Tibial artery (tissue), 4 donors: ENCODE measurements at regions of chr5 and their contacts with region 1.

Region 1: GRCh38 chr5:178279725-178280438 is 47.3 kb upstream of the PHYKPL start:
- DNase-seq: peak; percentile 71 to 87
- H3K4me3 ChIP-seq: no peak overlapping the region
- H3K27ac ChIP-seq: no peak overlapping the region
- H3K4me1 ChIP-seq: peaks cover 0 to 7% (median 3%) of the 10 kb centered on the region in 4 donors
- H3K27me3 ChIP-seq: peaks cover 0 to 43% of the 10 kb centered on the region in 2 donors
- CTCF ChIP-seq: peak; percentile 81 to 87

Region 2: DNA sequence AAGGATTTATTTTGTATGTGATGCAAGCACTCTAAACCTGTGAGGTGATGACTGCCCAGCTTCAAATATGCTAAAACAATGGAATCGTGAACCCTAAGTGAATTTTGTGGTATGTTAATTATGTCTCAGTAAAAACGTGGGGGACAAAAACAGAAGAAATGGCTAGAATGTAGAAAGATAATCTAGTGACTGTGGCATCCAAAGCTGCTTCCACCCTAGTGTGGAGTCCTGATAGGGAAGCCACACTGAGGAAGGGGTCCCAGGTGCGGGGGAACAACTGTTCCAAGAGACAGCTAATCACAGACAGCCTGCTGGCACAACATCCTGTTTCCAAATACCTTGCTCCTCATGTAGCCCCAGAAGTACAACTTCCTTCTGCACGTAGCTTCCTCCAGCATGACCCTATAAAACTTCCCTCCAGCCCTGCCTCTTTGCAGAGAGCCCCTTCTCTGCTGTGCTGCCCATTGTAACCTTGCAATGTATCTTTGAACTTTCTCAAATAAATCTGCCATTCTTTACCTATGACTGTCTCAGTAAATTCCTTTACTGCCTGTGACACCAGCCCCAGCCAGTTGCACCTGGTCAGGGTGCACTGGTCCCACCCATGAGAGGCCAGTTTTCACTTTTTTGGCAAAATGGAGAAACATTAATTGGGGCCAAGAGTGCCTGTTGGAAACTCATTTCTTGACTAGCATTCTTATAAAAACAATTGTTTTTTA is 97.6 kb before region 1 on chr5:
- intact Hi-C with region 1: no loop called
- DNase-seq: no peak
- H3K4me3 ChIP-seq: no peak overlapping the region
- H3K27ac ChIP-seq: no peak overlapping the region
- H3K4me1 ChIP-seq: no peaks in the 10 kb centered on the region
- H3K27me3 ChIP-seq: peaks cover 0 to 7% of the 10 kb centered on the region in 2 donors
- CTCF ChIP-seq: no peak

Region 3: DNA sequence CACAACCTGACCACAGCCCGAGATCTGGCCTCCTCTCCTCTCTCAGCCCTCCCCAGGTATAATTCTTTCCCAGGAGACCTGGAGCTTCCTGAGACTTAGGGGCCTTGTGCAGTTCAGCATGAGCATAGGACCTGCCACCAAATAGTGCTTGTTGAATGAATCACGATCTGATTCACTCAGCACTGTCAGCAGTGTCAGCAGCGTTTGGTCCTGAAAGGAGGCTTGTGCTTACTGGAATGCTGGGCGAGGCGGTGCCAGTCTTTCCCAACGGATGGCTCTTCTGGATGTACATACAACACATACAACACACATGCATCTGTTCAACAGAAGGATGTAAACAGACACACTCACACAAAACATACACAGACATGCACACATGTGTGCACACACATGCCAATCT is 137.0 kb after region 1 on chr5:
- intact Hi-C with region 1: no loop called
- DNase-seq: no peak
- H3K4me3 ChIP-seq: no peak overlapping the region
- H3K27ac ChIP-seq: no peak overlapping the region
- H3K4me1 ChIP-seq: no peaks in the 10 kb centered on the region
- H3K27me3 ChIP-seq: peaks cover 0 to 3% of the 10 kb centered on the region in 2 donors
- CTCF ChIP-seq: no peak

Region 4: GRCh38 chr5:178502401-178503100 is 222.7 kb after region 1 on chr5:
- intact Hi-C with region 1: no loop called
- DNase-seq: no peak
- H3K4me3 ChIP-seq: no peak overlapping the region
- H3K27ac ChIP-seq: no peak overlapping the region
- H3K4me1 ChIP-seq: no peaks in the 10 kb centered on the region
- H3K27me3 ChIP-seq: no peaks in the 10 kb centered on the region
- CTCF ChIP-seq: no peak

Region 5: DNA sequence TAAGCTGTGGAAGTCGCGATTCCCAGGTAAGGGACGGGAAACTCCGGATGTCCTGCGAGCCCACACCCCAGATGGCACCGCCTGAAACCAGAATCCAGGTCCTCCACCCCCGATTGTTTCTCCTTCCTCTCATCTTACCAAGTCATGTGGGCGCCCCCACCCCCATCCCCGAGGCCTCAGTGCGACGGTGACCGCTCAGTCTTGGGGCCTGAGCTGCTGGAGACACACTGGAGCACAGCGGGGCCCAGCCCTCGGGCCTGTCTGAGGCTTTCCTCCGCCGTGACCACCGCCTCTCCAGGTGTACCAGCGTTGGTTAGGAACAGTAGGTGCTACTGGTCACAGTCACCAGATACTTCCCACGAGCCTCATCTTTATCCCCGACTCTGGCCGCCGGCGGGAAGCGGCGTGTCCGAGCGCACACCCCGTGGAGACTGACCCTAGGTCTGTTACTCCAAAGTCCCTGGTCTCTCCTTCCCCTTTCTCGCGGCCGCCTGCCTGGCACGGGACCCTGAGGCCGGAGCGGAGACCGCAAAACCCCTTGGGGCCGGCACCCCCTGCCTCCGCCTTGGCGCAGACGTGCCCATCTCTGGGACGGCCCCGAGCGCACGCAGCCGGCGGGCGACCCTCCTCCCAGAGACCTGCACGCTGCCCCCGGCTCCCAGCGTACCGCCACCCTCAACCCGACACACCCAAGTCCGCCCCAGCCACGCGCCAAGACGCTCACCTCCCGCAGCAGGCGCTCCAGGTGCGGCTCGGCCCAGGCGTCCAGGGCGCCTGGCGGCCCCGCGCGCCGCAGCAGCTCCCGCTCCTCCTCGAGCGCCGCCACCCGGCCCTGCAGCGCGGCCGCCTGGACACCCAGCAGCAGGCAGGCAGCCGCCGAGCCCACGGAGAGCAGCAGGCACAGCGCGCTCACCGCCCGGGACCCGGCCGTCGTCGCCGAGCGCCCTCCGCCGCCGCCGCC is 309.6 kb after region 1 on chr5:
- intact Hi-C with region 1: loop called (anchors 10 kb)
- DNase-seq: no peak
- H3K4me3 ChIP-seq: peak overlapping the region; percentile 50 to 57
- H3K27ac ChIP-seq: peak overlapping the region in 1 of 2 donors; percentile 42
- H3K4me1 ChIP-seq: peaks cover 0 to 26% (median 19%) of the 10 kb centered on the region in 4 donors
- H3K27me3 ChIP-seq: peaks cover 0 to 29% of the 10 kb centered on the region in 2 donors
- CTCF ChIP-seq: no peak

Region 6: GRCh38 chr5:178642351-178642971 is 362.6 kb after region 1 on chr5:
- intact Hi-C with region 1: no loop called
- DNase-seq: no peak
- H3K4me3 ChIP-seq: no peak overlapping the region
- H3K27ac ChIP-seq: no peak overlapping the region
- H3K4me1 ChIP-seq: no peaks in the 10 kb centered on the region
- H3K27me3 ChIP-seq: no peaks in the 10 kb centered on the region
- CTCF ChIP-seq: no peak